Activated CD4-positive, alpha-beta T cell treated with anti-CD3 and anti-CD28 coated beads for 36 hours (primary cell): ENCODE measurements at regions of chr17 and their contacts with region 1.

Region 1: GRCh38 chr17:17416007-17416399 is 60.8 kb upstream of the MED9 start:
- DNase-seq: peak; percentile 46
- ATAC-seq: peak; percentile 83
- H3K4me3 Mint-ChIP-seq: no peak overlapping the region
- H3K27ac Mint-ChIP-seq: peak overlapping the region; percentile 88
- H3K4me1 Mint-ChIP-seq: peaks cover 14% of the 10 kb centered on the region
- H3K27me3 Mint-ChIP-seq: no peaks in the 10 kb centered on the region

Region 2: DNA sequence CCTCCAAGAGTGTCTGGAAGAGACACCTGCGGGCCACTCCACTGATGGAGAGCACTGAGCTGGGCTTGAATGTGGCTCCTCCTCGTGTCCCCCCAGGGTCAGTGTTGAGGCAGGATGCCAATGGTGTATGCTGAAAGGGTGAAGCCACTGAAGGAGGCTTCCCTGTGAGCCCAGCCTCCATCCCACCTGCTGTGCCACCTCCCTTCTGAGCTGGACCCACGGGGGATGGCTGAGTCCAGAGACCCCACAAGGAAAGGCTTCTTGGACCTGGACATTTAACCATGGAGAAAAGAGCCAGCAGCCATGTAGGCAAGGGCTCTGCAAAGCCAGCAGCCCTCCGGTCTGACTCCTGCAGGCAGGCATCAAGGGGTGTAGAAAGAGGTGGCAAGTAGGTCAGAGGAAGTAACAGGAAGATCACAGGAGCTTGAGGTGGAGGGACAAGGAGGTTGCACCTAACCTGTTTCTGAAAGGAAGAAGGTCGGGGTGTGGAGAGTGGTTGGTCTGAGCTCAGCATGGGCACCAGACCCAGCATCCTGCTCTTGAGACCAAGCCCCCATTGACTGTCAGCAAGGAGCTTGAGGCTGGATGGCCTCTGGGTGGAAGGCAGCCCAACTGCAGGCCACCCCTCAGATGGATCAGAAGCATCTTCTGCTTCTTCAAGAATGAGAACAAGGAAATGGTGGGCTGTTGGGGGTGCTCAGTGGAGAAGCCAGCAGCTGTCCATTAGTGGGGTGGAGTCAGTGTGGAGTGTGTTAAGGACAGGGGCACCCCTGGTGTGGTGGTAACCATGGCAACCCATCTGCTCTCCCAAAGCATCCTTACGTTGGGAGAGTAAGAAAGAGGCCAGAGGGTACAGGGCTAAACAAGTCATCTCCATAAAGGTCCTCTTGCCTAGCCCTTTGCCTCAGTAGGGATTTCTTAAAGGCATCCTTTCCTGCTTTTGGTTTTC is 290.6 kb before region 1 on chr17:
- CTCF ChIA-PET with region 1: no interaction called
- POLR2A ChIA-PET with region 1: no interaction called
- intact Hi-C with region 1: no loop called
- DNase-seq: no peak
- ATAC-seq: peak; percentile 60
- H3K4me3 Mint-ChIP-seq: no peak overlapping the region
- H3K27ac Mint-ChIP-seq: peak overlapping the region; percentile 61
- H3K4me1 Mint-ChIP-seq: peaks cover 50% of the 10 kb centered on the region
- H3K27me3 Mint-ChIP-seq: no peaks in the 10 kb centered on the region

Region 3: GRCh38 chr17:17476865-17477467 is 61.0 kb after region 1 on chr17 and contains the start of gene MED9:
- CTCF ChIA-PET with region 1: no interaction called
- POLR2A ChIA-PET with region 1: no interaction called
- intact Hi-C with region 1: loop called in 1 of 2 experiments (anchors 5 kb)
- DNase-seq: peak; percentile 97
- ATAC-seq: peak; percentile 94
- H3K4me3 Mint-ChIP-seq: peak within 1 kb of the TSS; percentile 94
- H3K27ac Mint-ChIP-seq: peak within 1 kb of the TSS; percentile 84
- H3K4me1 Mint-ChIP-seq: peaks cover 44% of the 10 kb centered on the region
- H3K27me3 Mint-ChIP-seq: no peaks in the 10 kb centered on the region
- total RNA-seq, gene MED9: 12.2 to 14.3 TPM